Naive thymus-derived CD4-positive, alpha-beta T cell (primary cell): ENCODE measurements at regions of chr3 and their contacts with region 1.

Region 1: GRCh38 chr3:150721285-150722130 is 17.8 kb upstream of the ERICH6 start:
- DNase-seq: peak in 7 of 9 donors; percentile 33 to 77 (median 70)
- ATAC-seq: peak; percentile 94
- H3K4me3 ChIP-seq: no peak overlapping the region
- H3K4me3 Mint-ChIP-seq: peak overlapping the region in 1 of 10 donors; percentile 3
- H3K27ac ChIP-seq: no peak overlapping the region
- H3K27ac Mint-ChIP-seq: no peak overlapping the region
- H3K4me1 ChIP-seq: no peaks in the 10 kb centered on the region
- H3K4me1 Mint-ChIP-seq: peaks cover 0 to 19% (median 9%) of the 10 kb centered on the region in 7 donors
- H3K27me3 ChIP-seq: no peaks in the 10 kb centered on the region
- H3K27me3 Mint-ChIP-seq: no peaks in the 10 kb centered on the region

Region 2: GRCh38 chr3:150528354-150528797 is 193.1 kb before region 1 on chr3:
- CTCF ChIA-PET with region 1: no interaction called
- POLR2A ChIA-PET with region 1: no interaction called
- intact Hi-C with region 1: loop called (anchors 1 kb)
- DNase-seq: peak in 4 of 9 donors; percentile 23 to 37 (median 28)
- ATAC-seq: peak; percentile 42
- H3K4me3 ChIP-seq: no peak overlapping the region
- H3K4me3 Mint-ChIP-seq: no peak overlapping the region
- H3K27ac ChIP-seq: no peak overlapping the region
- H3K27ac Mint-ChIP-seq: no peak overlapping the region
- H3K4me1 ChIP-seq: no peaks in the 10 kb centered on the region
- H3K4me1 Mint-ChIP-seq: peaks cover 0 to 8% (median 5%) of the 10 kb centered on the region in 7 donors
- H3K27me3 ChIP-seq: no peaks in the 10 kb centered on the region
- H3K27me3 Mint-ChIP-seq: peaks cover 0 to 21% (median 0%) of the 10 kb centered on the region in 5 donors

Region 3: GRCh38 chr3:150545425-150546225 is 175.9 kb before region 1 on chr3:
- CTCF ChIA-PET with region 1: no interaction called
- POLR2A ChIA-PET with region 1: no interaction called
- intact Hi-C with region 1: no loop called
- DNase-seq: peak in 4 of 9 donors; percentile 6 to 53 (median 18)
- ATAC-seq: peak; percentile 5
- H3K4me3 ChIP-seq: peak overlapping the region; percentile 68
- H3K4me3 Mint-ChIP-seq: peak overlapping the region; percentile 88 to 99 (median 96)
- H3K27ac ChIP-seq: peak overlapping the region; percentile 96
- H3K27ac Mint-ChIP-seq: peak overlapping the region; percentile 93 to 100 (median 98)
- H3K4me1 ChIP-seq: peaks cover 15 to 24% of the 10 kb centered on the region in 2 donors
- H3K4me1 Mint-ChIP-seq: peaks cover 31 to 83% (median 78%) of the 10 kb centered on the region in 7 donors
- H3K27me3 ChIP-seq: no peaks in the 10 kb centered on the region
- H3K27me3 Mint-ChIP-seq: no peaks in the 10 kb centered on the region

Region 4: DNA sequence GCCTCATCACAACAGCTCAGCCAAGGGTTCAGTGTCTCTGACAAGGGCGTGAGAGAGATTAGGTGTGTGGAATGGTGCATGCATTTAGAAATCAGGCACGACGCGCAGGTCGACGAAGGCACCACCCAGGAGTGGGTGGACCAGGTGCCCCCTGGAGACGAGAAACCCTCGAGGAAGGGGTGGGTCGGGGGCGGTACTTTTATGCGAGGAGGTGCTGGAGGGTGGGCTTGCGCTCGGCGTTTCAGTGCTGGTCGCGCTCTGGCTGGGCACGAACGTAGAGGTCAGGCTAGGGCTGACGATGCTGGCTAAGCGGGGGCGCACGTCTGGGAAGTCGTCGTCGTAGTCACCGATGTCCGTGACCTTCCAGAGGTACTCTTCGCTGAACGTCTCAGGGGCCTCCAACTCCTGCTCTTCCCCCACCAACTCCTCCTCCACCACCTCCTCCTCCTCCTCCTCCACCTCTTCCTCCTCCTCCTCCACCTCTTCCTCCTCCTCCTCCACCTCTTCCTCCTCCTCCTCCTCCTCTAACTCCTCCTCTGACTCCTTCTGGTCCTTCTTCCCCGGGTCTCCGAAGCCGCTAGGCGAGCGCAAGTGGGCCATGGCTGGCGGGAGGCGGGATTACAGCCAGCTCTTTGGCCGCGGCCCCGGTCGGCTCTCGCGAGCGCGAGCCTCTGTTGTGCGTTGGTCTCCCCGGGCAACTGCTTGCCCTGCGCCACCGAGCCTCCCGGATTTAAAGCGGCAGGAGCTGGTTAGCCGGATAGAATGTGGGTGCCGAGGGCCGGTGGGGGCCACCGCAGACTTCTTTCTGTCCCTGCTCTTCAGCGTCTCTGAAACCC is 18.0 kb before region 1 on chr3 and contains the start of gene ERICH6:
- CTCF ChIA-PET with region 1: interaction called, 4 read pairs
- POLR2A ChIA-PET with region 1: interaction called, 3 read pairs
- intact Hi-C with region 1: loop called (anchors 1 to 2 kb)
- DNase-seq: peak; percentile 59 to 83 (median 71)
- ATAC-seq: peak; percentile 93
- H3K4me3 ChIP-seq: peak within 1 kb of the TSS; percentile 94
- H3K4me3 Mint-ChIP-seq: peak within 1 kb of the TSS; percentile 82 to 98 (median 97)
- H3K27ac ChIP-seq: peak within 1 kb of the TSS; percentile 84
- H3K27ac Mint-ChIP-seq: peak within 1 kb of the TSS; percentile 93 to 100 (median 97)
- H3K4me1 ChIP-seq: peaks cover 4 to 5% of the 10 kb centered on the region in 2 donors
- H3K4me1 Mint-ChIP-seq: peaks cover 11 to 24% (median 20%) of the 10 kb centered on the region in 7 donors
- H3K27me3 ChIP-seq: no peaks in the 10 kb centered on the region
- H3K27me3 Mint-ChIP-seq: peaks cover 0 to 6% (median 0%) of the 10 kb centered on the region in 5 donors
- total RNA-seq, gene ERICH6: 0.24 to 1.4 (median 0.53) TPM

Region 5: GRCh38 chr3:150737874-150738713 is 16.6 kb after region 1 on chr3:
- CTCF ChIA-PET with region 1: no interaction called
- POLR2A ChIA-PET with region 1: no interaction called
- intact Hi-C with region 1: loop called in 1 of 2 experiments (anchors 2 kb)
- DNase-seq: peak in 1 of 9 donors; percentile 49
- ATAC-seq: peak; percentile 41
- H3K4me3 ChIP-seq: no peak overlapping the region
- H3K4me3 Mint-ChIP-seq: peak overlapping the region in 1 of 10 donors; percentile 5
- H3K27ac ChIP-seq: no peak overlapping the region
- H3K27ac Mint-ChIP-seq: peak overlapping the region in 3 of 9 donors; percentile 33 to 59 (median 41)
- H3K4me1 ChIP-seq: peaks cover 0 to 5% of the 10 kb centered on the region in 2 donors
- H3K4me1 Mint-ChIP-seq: peaks cover 17 to 60% (median 49%) of the 10 kb centered on the region in 7 donors
- H3K27me3 ChIP-seq: no peaks in the 10 kb centered on the region
- H3K27me3 Mint-ChIP-seq: no peaks in the 10 kb centered on the region

Region 6: DNA sequence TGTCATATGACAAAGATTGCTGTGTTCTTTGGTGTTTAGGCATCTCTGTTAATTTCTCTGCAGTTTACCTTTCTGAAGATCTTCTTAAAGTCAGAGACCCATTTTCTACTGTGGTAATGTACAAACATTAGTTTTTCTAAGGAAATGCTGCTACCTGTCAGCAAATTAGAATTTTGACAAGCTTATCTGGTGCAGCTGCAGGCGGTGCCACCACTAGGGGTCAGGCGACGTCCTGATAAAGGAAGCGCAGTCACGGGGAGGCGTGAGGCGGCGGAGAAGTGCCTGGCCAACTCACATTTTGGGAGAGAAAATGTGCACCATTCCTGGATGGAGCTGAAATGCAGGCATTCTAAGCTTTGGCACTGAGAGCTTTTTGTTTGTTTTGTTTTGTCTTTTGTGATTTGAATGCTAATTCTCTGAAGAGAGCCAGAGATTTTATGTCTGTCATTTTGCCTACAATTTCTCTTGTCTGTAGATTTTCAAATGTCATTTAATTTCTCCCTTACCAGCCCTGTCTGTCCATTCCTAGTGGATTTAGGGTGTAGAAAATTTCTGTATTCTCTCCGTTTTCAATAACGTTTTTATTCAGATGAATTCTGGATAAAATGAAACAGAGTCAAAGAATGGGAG is 66.3 kb after region 1 on chr3:
- CTCF ChIA-PET with region 1: interaction called, 10 read pairs
- POLR2A ChIA-PET with region 1: interaction called, 4 read pairs
- intact Hi-C with region 1: loop called (anchors 1 kb)
- DNase-seq: peak; percentile 45 to 77 (median 63)
- ATAC-seq: peak; percentile 92
- H3K4me3 ChIP-seq: no peak overlapping the region
- H3K4me3 Mint-ChIP-seq: peak overlapping the region in 2 of 10 donors; percentile 24 to 50
- H3K27ac ChIP-seq: no peak overlapping the region
- H3K27ac Mint-ChIP-seq: no peak overlapping the region
- H3K4me1 ChIP-seq: no peaks in the 10 kb centered on the region
- H3K4me1 Mint-ChIP-seq: peaks cover 0 to 22% (median 4%) of the 10 kb centered on the region in 7 donors
- H3K27me3 ChIP-seq: no peaks in the 10 kb centered on the region
- H3K27me3 Mint-ChIP-seq: peaks cover 0 to 9% (median 4%) of the 10 kb centered on the region in 5 donors

Region 7: GRCh38 chr3:150870396-150870795 is 148.9 kb after region 1 on chr3:
- CTCF ChIA-PET with region 1: interaction called, 18 read pairs
- POLR2A ChIA-PET with region 1: no interaction called
- intact Hi-C with region 1: loop called (anchors 1 kb)
- DNase-seq: no peak
- ATAC-seq: no peak
- H3K4me3 ChIP-seq: no peak overlapping the region
- H3K4me3 Mint-ChIP-seq: no peak overlapping the region
- H3K27ac ChIP-seq: no peak overlapping the region
- H3K27ac Mint-ChIP-seq: no peak overlapping the region
- H3K4me1 ChIP-seq: no peaks in the 10 kb centered on the region
- H3K4me1 Mint-ChIP-seq: peaks cover 0 to 3% (median 0%) of the 10 kb centered on the region in 7 donors
- H3K27me3 ChIP-seq: no peaks in the 10 kb centered on the region
- H3K27me3 Mint-ChIP-seq: peaks cover 4 to 17% (median 12%) of the 10 kb centered on the region in 5 donors

Region 8: GRCh38 chr3:151086484-151087456 is 365.3 kb after region 1 on chr3:
- CTCF ChIA-PET with region 1: interaction called, 3 read pairs
- POLR2A ChIA-PET with region 1: no interaction called
- intact Hi-C with region 1: loop called in 1 of 2 experiments (anchors 5 kb)
- DNase-seq: peak; percentile 32 to 72 (median 50)
- ATAC-seq: peak; percentile 88
- H3K4me3 ChIP-seq: peak overlapping the region; percentile 58
- H3K4me3 Mint-ChIP-seq: peak overlapping the region; percentile 85 to 94 (median 90)
- H3K27ac ChIP-seq: no peak overlapping the region
- H3K27ac Mint-ChIP-seq: peak overlapping the region in 4 of 9 donors; percentile 20 to 73 (median 57)
- H3K4me1 ChIP-seq: peaks cover 0 to 6% of the 10 kb centered on the region in 2 donors
- H3K4me1 Mint-ChIP-seq: peaks cover 0 to 21% (median 11%) of the 10 kb centered on the region in 7 donors
- H3K27me3 ChIP-seq: peaks cover 0 to 10% of the 10 kb centered on the region in 2 donors
- H3K27me3 Mint-ChIP-seq: peaks cover 31 to 65% (median 58%) of the 10 kb centered on the region in 5 donors